Activated T-helper 1 cell treated with anti-CD3 and anti-CD28 coated beads, Interleukin-12 subunit alpha, Interleukin-12 subunit beta, Interleukin-2, Interleukin-4 antibody, amounts not matched to agents 30 ng/mL and 10 ng/mL and 1 ng/mL, durations not matched to agents 14 hours and 24 hours and 36 hours (primary cell): ENCODE measurements at regions of chr11 and their contacts with region 1.

Region 1: DNA sequence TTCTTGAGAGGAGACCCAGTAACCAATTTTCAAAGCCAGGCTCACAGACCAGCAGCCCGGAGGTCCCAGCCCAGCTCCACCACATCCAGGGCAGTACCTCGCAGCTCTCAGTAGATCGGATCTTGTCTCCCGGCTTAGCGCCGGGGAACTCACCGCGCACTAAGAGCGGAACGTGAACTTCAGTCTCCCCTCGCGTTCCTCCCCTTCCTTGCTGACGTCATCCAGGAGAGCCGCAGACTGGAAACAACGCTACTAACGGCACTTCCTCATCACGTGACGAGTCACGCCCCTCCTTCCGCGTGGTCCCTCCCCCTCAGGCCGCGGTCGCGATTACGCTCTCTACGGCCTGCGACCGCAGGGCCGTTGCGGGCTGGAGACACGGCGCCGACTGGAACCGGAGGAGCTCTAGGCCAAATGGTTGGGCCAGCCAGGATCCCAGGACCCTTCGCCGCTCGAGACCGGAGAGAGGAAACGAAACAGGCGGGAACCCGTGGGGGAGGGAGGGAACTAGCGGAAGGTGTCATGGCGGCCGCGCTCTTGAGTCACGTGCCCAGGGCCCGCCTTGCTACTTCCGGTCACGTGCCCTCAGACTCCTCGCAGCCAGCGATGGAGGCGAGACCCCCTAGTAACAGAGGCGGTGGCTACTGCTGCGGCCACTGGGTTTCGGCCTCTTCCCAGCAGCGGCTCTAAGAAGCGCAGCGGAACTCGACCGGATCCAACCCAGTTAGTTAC is at the starts of genes GTF2H1 and HPS5:
- DNase-seq: peak; percentile 95
- H3K4me3 Mint-ChIP-seq: peak within 1 kb of the TSS; percentile 93
- H3K27ac Mint-ChIP-seq: peak within 1 kb of the TSS; percentile 99
- H3K4me1 Mint-ChIP-seq: peaks cover 70% of the 10 kb centered on the region
- H3K27me3 Mint-ChIP-seq: no peaks in the 10 kb centered on the region
- total RNA-seq, gene GTF2H1: 52.2 and 56.9 TPM in 2 replicates
- total RNA-seq, gene HPS5: 19.9 and 21.4 TPM in 2 replicates

Region 2: DNA sequence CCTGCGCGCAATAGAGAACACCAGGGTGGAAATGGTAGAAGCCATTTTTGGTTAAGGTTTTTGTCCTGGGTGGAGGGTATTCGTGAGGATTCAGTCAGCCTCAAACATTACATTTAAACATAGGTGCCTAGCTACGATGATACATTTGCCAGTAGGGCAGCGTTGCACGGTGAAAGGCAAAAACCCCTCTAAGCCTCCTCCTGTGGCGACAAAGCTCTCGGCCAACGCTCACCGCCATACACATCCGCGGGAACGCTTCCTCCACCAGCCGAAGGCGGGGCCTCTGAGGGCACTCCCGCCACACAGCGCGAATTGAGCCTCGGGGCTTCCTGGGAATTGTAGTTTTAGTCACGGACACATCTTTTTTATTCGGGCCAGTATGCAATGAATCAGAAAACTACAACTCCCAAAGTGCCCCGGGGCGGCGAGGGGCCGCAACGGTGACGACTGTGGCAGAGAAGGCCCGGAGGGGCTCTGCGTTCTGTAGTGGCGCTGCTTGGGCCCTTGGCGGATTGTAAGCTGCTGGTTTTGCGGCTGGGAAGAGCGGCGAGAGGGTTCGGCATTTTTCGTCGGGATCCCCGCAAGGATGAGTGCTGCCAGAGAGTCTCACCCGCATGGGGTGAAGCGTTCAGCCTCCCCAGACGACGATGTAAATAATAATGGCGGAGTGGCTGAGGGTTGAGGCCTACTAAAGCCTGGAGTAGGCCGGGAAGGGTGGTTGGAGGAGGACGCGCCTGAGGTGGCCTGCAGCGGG is 1583.8 kb before region 1 on chr11 and contains the start of gene C11orf58:
- intact Hi-C with region 1: loop called (anchors 5 kb)
- DNase-seq: peak; percentile 93
- H3K4me3 Mint-ChIP-seq: peak within 1 kb of the TSS; percentile 73
- H3K27ac Mint-ChIP-seq: peak within 1 kb of the TSS; percentile 88
- H3K4me1 Mint-ChIP-seq: peaks cover 32% of the 10 kb centered on the region
- H3K27me3 Mint-ChIP-seq: no peaks in the 10 kb centered on the region
- total RNA-seq, gene C11orf58: 150 and 152 TPM in 2 replicates

Region 3: GRCh38 chr11:18105802-18106574 is 216.2 kb before region 1 on chr11 and contains the start of gene SAAL1:
- intact Hi-C with region 1: loop called (anchors 2 kb)
- DNase-seq: peak; percentile 86
- H3K4me3 Mint-ChIP-seq: peak within 1 kb of the TSS; percentile 94
- H3K27ac Mint-ChIP-seq: peak within 1 kb of the TSS; percentile 88
- H3K4me1 Mint-ChIP-seq: peaks cover 33% of the 10 kb centered on the region
- H3K27me3 Mint-ChIP-seq: peaks cover 3% of the 10 kb centered on the region
- total RNA-seq, gene SAAL1: 42.5 and 42.9 TPM in 2 replicates

Region 4: DNA sequence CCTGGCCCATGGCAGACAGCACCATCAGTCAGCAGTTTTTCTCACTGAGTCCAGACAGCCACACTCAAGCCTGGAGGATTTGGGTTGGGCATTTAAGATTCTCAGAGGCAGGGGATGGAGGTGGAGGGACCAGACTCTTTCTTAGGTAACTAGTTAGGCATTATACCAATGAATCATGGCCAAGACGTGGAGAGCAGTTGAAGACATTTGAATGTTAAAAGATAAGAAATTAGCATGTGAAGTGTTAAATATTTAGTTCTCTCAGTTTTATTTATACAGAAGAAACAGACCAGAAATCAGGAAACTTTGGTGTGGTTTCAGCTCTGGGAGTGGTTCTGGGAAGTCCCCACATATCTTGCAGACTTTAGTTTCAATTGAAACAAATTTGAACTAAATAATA is 10.2 kb after region 1 on chr11:
- intact Hi-C with region 1: loop called (anchors 1 kb)
- DNase-seq: no peak
- H3K4me3 Mint-ChIP-seq: peak overlapping the region; percentile 67
- H3K27ac Mint-ChIP-seq: peak overlapping the region; percentile 88
- H3K4me1 Mint-ChIP-seq: peaks cover 67% of the 10 kb centered on the region
- H3K27me3 Mint-ChIP-seq: no peaks in the 10 kb centered on the region

Region 5: DNA sequence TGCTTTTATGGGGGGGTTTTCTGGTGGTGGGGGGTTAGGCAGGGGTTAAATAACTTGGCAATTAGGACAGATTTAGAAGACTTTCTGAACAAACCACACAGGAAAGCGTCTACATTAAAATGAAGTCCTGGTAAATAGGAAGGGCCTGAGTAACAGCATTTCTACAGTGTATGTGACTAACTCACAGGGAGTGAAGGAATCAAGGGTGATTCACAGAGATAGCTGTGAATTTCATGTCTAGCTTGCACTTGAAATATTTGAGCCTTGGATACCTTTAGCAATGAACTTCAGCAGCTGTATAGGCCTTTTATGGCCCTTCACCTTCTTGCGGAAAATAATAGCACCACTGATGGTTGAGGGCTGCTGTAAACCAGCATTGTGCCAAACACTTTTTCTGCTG is 46.1 kb after region 1 on chr11:
- intact Hi-C with region 1: no loop called
- DNase-seq: no peak
- H3K4me3 Mint-ChIP-seq: no peak overlapping the region
- H3K27ac Mint-ChIP-seq: no peak overlapping the region
- H3K4me1 Mint-ChIP-seq: peaks cover 16% of the 10 kb centered on the region
- H3K27me3 Mint-ChIP-seq: no peaks in the 10 kb centered on the region

Region 6: DNA sequence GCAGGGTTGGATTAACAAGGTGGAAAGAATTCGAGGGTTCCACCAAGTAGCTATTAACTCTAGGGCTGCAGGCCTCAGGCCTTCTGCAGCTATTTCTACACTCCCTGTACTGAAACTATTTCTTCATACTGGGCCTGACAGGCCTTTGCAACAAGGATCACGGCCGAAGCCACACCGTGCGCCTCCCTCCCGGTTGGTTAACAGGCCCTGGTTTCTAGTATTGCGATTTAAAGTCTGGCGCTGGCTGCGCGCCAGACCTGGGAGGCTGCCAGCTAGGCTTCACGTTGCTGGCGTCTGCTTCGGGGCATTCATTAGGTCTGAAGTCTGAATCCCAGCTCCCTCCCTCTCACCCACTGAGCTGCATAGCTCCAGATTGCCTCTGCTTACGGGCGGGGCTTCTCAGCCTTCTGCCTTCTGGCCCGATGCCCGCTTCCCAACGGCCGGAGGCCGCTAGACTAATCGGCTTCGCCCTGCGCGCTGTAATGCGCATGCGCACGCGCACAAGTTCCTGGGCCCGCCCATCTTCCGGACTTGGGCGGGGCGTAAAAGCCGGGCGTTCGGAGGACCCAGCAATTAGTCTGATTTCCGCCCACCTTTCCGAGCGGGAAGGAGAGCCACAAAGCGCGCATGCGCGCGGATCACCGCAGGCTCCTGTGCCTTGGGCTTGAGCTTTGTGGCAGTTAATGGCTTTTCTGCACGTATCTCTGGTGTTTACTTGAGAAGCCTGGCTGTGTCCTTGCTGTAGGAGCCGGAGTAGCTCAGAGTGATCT is 73.8 kb after region 1 on chr11:
- intact Hi-C with region 1: loop called (anchors 1 kb)
- DNase-seq: peak; percentile 96
- H3K4me3 Mint-ChIP-seq: peak overlapping the region; percentile 99
- H3K27ac Mint-ChIP-seq: peak overlapping the region; percentile 98
- H3K4me1 Mint-ChIP-seq: peaks cover 67% of the 10 kb centered on the region
- H3K27me3 Mint-ChIP-seq: no peaks in the 10 kb centered on the region

Region 7: GRCh38 chr11:18698341-18699268 is 376.5 kb after region 1 on chr11 and contains the start of gene TMEM86A:
- intact Hi-C with region 1: loop called (anchors 1 kb)
- DNase-seq: peak; percentile 89
- H3K4me3 Mint-ChIP-seq: peak within 1 kb of the TSS; percentile 83
- H3K27ac Mint-ChIP-seq: peak within 1 kb of the TSS; percentile 65
- H3K4me1 Mint-ChIP-seq: peaks cover 25% of the 10 kb centered on the region
- H3K27me3 Mint-ChIP-seq: peaks cover 22% of the 10 kb centered on the region
- total RNA-seq, gene TMEM86A: 0.52 and 0.93 TPM in 2 replicates